ENCODE measurements at regions of chr16 and their contacts with region 1.

Region 1: DNA sequence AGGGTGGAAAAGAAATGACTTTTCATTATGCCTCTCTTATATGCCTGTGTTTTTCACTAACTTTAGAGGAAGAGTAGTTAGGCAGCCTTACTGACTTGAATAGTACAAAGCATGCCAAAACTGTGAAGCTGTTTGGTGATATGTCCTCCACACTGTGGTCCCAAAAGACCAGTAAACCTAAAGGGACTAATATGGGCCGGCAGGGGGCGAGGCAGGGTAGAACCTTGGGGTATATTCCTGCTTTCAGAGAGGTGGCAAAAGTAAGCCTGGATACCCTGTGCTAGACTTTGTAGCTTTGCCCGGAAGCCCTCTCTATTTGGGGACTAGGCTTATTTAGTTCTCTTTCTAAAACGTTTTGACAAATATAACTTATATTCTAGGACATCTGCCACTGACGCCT is 36.5 kb upstream of the VWA3A start:
- DNase-seq: no peak
- ATAC-seq: no peak
- H3K4me3 ChIP-seq: no peak overlapping the region
- H3K27ac ChIP-seq: no peak overlapping the region
- H3K4me1 ChIP-seq: peaks cover 4% of the 10 kb centered on the region; the same call in 1 of the 2 replicates
- H3K27me3 ChIP-seq: no peaks in the 10 kb centered on the region
- CTCF ChIP-seq: no peak
- EP300 ChIP-seq: no peak
- POLR2A ChIP-seq: no peak
- RAD21 ChIP-seq: no peak

Region 2: DNA sequence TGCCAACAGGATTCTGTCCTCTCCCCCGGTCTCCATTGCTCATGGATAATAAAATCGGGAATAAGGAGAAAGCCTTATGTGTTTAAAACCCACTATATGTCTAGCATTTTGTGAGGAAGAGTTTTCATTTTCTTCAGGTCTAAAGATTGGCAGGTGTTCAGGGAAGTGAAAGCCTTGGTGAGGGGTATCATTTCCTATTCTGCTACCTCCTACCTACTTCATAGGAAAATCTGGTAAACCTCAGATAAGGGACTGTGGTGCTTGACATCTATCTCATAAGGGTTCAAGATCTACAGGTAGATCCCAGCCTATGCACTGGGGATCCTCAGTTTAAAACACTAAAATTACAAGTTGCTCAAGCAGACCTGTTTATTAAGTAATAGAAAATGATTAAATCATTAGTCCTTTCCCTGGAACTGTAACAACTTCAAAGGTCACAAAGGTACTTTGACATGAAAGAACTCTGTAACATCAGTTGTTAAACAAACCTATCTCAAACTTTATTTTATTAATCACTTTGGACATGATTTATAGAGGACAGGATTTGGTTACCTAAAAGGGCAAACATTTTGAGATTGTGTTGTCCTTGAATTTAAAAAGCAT is 41.5 kb before region 1 on chr16:
- CTCF ChIA-PET with region 1: interaction called, 3 read pairs
- POLR2A ChIA-PET with region 1: interaction called, 8 read pairs
- RAD21 ChIA-PET with region 1: interaction called, 4 read pairs
- SMC1A ChIA-PET with region 1: interaction called, 11 read pairs
- in situ Hi-C with region 1: no loop called
- intact Hi-C with region 1: loop called (anchors 5 kb)
- DNase-seq: no peak
- ATAC-seq: peak; percentile 78
- H3K4me3 ChIP-seq: peak overlapping the region; percentile 45; the same call in 1 of the 2 replicates
- H3K27ac ChIP-seq: no peak overlapping the region
- H3K4me1 ChIP-seq: peaks cover 29% of the 10 kb centered on the region
- H3K27me3 ChIP-seq: no peaks in the 10 kb centered on the region
- CTCF ChIP-seq: no peak
- EP300 ChIP-seq: peak in 1 of 2 experiments; percentile 69; a peak in 1 of 4 replicates
- POLR2A ChIP-seq: no peak
- RAD21 ChIP-seq: no peak

Region 3: DNA sequence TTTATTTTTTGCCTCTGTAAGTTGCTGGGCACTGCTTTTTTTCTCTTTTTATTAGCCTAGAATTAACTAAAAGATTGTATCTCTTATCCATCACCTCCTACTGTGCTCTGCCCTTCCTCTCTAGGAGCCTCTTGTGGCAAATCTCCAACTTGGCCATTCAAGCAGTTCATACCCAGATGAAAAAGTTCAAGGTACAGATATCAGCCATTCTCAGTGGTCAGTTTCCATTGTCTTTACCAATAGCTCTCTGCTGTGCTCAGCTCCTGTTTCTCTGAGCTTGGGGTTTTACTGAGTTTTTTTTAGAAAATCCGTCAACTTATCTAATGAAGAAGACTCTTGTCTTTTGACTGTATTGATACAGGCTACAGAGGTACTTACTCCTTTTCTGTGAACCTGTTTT is 32.4 kb before region 1 on chr16:
- CTCF ChIA-PET with region 1: interaction called, 3 read pairs
- POLR2A ChIA-PET with region 1: interaction called, 7 read pairs
- RAD21 ChIA-PET with region 1: interaction called, 3 read pairs
- SMC1A ChIA-PET with region 1: interaction called, 11 read pairs
- in situ Hi-C with region 1: no loop called
- intact Hi-C with region 1: no loop called
- DNase-seq: peak; percentile 44
- ATAC-seq: peak; percentile 94
- H3K4me3 ChIP-seq: no peak overlapping the region
- H3K27ac ChIP-seq: no peak overlapping the region
- H3K4me1 ChIP-seq: peaks cover 23% of the 10 kb centered on the region
- H3K27me3 ChIP-seq: no peaks in the 10 kb centered on the region
- CTCF ChIP-seq: no peak
- EP300 ChIP-seq: peak in 1 of 2 experiments; percentile 28; a peak in 1 of 4 replicates
- POLR2A ChIP-seq: no peak
- RAD21 ChIP-seq: no peak

Region 4: DNA sequence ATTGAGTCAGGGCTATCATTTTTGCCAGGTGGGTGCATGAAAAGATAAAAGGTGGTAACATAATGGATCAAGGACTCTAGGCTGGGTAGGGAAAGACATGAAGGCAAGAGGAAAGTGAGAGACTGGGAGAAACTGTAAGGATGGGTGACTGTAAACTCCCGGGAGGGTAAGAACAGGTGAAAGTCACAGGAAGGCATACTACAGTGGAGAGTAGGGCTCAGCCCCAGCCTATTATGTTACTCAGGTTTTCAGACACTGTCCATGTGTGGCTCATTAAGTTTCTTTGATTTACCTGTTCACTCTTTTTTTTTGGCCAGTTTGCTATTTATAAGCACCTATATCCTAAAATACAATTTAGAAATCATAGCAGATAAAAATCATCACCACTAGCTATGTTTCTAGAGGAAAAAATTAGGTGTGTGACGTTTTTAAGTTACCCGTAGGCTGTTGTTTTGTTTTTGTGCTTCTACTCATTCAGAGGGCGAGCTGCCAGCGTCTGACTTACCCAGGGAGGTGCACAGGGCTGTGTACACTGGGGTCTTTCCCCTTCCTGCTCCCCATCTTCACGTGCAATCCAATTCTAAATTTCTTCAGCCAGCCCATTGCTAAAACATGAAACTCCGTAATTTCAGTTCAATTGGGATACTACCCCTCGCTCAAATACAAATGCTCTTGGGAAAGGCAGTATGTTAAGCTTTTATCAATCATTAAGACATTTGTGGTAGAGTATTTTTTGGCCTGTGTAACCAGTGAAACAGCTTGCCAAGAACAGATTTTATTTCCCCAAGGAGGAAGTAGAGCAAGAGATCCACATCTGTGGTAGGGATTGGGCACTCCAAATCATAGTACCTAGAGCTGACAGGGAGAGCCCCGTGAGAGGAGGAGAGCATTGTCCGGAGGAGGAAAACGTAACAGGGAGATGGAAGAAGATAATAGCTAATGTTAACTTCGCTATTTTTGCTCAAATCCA is 14.8 kb after region 1 on chr16:
- CTCF ChIA-PET with region 1: interaction called, 7 read pairs
- POLR2A ChIA-PET with region 1: interaction called, 5 read pairs
- RAD21 ChIA-PET with region 1: no interaction called
- SMC1A ChIA-PET with region 1: interaction called, 17 read pairs
- in situ Hi-C with region 1: no loop called
- intact Hi-C with region 1: no loop called
- DNase-seq: no peak
- ATAC-seq: no peak
- H3K4me3 ChIP-seq: no peak overlapping the region
- H3K27ac ChIP-seq: no peak overlapping the region
- H3K4me1 ChIP-seq: no peaks in the 10 kb centered on the region
- H3K27me3 ChIP-seq: no peaks in the 10 kb centered on the region
- CTCF ChIP-seq: no peak
- EP300 ChIP-seq: no peak
- POLR2A ChIP-seq: no peak
- RAD21 ChIP-seq: no peak

Measured in GM12878 (cell line).